ENCODE measurements at regions of chr5 and their contacts with region 1.

Region 1: DNA sequence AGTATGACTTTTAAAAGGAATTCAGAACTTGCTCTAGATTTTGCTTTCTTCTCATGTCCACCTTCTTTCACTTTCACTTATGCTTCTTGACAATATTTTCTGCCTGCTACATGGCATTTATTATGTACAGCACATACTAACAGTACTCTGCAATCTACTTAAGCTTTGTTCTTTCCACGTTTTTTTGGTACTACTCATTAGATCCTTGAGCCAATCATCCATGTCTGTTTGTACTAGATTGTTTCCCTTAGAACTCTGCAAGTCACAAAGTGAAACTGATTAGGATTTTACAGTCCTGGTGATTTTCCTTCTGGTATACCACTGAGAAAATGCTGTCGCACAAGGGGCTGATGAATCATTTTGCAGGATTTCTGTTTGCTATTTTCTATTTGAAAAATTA is 78.3 kb downstream of the PARP8 start:
- DNase-seq: no peak

Region 2: GRCh38 chr5:50667653-50668595 is 76.9 kb before region 1 on chr5:
- intact Hi-C with region 1: loop called (anchors 10 kb)
- DNase-seq: peak; percentile 9 to 80 (median 59)

Region 3: DNA sequence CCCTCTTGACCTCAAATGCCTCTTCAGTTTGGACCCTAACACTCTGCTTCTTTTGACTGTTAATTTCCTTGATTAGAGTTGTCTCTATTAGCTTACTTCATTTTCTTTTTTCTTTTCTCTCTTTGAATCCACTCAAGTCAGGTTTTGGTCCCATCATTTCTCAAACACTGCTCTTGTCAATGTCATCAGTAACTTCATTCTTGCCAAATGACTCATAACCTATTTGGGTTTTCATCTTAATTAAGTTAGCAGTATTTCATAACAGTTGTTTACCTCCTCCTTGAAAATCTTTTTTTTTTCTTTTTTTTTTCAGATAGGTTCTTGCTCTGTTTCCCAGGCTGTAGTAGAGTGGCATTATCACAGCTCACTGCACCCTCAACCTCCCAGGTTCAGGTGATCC is 41.3 kb after region 1 on chr5:
- intact Hi-C with region 1: no loop called
- DNase-seq: no peak

Measured in head of caudate nucleus (tissue), 42 donors.